Activated CD8-positive, alpha-beta memory T cell treated with anti-CD3 and anti-CD28 coated beads, Interleukin-2, amount 10 ng/mL, durations not matched to agents 7 days and 5 days (primary cell): ENCODE measurements at regions of chr15 and their contacts with region 1.

Region 1: GRCh38 chr15:63191895-63192618 is 2.7 kb downstream of the RAB8B start:
- DNase-seq: peak; percentile 81
- ATAC-seq: peak; percentile 43
- H3K4me3 Mint-ChIP-seq: peak overlapping the region; percentile 96
- H3K27ac Mint-ChIP-seq: peak overlapping the region; percentile 100
- H3K4me1 Mint-ChIP-seq: peaks cover 70% of the 10 kb centered on the region
- H3K27me3 Mint-ChIP-seq: no peaks in the 10 kb centered on the region

Region 2: GRCh38 chr15:62782039-62782791 is 409.8 kb before region 1 on chr15:
- CTCF ChIA-PET with region 1: no interaction called
- DNase-seq: no peak
- ATAC-seq: no peak
- H3K4me3 Mint-ChIP-seq: no peak overlapping the region
- H3K27ac Mint-ChIP-seq: no peak overlapping the region
- H3K4me1 Mint-ChIP-seq: no peaks in the 10 kb centered on the region
- H3K27me3 Mint-ChIP-seq: peaks cover 11% of the 10 kb centered on the region

Region 3: DNA sequence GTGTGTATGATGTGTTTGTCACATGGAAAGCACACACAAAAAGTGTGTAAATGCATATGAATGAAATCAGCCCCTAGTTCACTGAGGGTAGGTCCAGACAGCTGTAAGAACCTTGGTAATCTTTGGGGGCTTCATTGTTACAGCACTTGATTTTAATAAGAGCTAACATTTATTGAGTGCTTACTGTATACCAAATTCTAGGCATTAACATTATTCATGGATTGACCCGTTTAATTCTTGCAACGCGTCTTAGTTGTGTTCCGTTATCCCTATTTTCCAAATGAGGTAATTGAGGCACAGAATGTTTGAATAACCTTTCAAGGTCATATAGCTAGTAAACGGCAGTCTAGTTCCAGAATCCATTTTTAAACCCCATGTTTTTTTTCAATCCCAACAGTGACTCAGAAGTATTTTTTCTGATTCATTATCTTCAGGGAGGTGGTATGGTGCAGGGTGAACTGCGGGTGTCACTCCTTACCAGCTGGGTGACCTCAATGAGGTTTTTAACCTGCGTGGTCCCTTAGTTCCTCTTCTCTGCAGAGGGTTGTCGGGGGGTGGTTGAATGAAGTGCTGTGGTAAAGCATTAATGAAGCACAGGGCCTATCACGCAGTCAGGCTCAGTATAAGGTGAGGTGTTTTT is 11.5 kb after region 1 on chr15:
- CTCF ChIA-PET with region 1: interaction called, 16 read pairs
- DNase-seq: peak; percentile 83
- ATAC-seq: peak; percentile 82
- H3K4me3 Mint-ChIP-seq: peak overlapping the region; percentile 16
- H3K27ac Mint-ChIP-seq: peak overlapping the region; percentile 47
- H3K4me1 Mint-ChIP-seq: peaks cover 76% of the 10 kb centered on the region
- H3K27me3 Mint-ChIP-seq: no peaks in the 10 kb centered on the region

Region 4: DNA sequence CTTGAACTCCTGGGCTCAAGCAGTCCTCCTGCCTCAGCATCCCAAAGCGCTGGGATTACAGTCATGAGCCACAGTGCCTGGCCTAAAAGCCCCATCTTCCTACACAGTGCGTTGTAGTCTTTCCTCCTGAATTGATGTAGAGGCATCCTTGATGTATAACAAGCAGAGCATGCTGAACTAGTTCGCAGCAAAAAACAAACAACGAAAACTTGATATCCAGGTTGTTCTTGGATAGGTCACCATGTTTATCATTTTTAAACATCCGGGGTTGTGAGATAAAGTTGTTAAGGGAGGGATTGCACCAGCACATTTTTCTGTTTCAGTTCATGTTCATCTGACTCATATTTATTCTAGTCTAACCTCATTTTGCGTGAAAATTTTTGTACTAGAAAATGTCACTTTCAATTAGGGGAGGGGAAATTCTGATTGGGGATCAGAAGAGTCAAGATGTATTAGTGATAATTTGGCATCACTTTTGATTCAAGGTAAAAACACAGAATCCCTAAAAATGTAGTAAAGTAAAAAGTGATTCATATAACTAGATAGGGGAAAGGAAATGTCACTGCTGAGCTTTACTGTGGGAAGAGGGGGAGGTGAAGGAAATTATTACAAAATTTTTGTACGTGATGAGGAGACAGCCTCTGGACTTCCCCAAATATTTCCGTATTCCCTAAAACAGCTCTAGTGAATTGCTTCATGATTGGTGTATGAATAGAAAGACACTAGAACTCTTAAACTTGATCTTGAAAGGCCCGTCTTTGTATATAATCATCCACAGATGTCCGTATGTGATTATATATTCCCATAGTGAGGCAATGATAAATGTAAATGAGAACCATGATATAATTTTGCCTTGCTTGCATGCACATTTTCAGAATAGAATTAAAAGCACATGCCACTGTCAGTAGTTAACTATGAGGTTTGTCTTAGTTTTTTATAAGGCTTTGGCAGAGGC is 20.3 kb after region 1 on chr15:
- CTCF ChIA-PET with region 1: interaction called, 15 read pairs
- DNase-seq: no peak
- ATAC-seq: peak; percentile 59
- H3K4me3 Mint-ChIP-seq: peak overlapping the region; percentile 50
- H3K27ac Mint-ChIP-seq: peak overlapping the region; percentile 94
- H3K4me1 Mint-ChIP-seq: peaks cover 69% of the 10 kb centered on the region
- H3K27me3 Mint-ChIP-seq: no peaks in the 10 kb centered on the region

Region 5: GRCh38 chr15:63234451-63234870 is 42.4 kb after region 1 on chr15:
- CTCF ChIA-PET with region 1: interaction called, 32 read pairs
- DNase-seq: no peak
- ATAC-seq: no peak
- H3K4me3 Mint-ChIP-seq: no peak overlapping the region
- H3K27ac Mint-ChIP-seq: peak overlapping the region; percentile 42
- H3K4me1 Mint-ChIP-seq: peaks cover 63% of the 10 kb centered on the region
- H3K27me3 Mint-ChIP-seq: no peaks in the 10 kb centered on the region

Region 6: GRCh38 chr15:63288778-63289378 is 96.8 kb after region 1 on chr15:
- CTCF ChIA-PET with region 1: no interaction called
- DNase-seq: no peak
- ATAC-seq: peak; percentile 69
- H3K4me3 Mint-ChIP-seq: no peak overlapping the region
- H3K27ac Mint-ChIP-seq: no peak overlapping the region
- H3K4me1 Mint-ChIP-seq: peaks cover 8% of the 10 kb centered on the region
- H3K27me3 Mint-ChIP-seq: no peaks in the 10 kb centered on the region

Region 7: DNA sequence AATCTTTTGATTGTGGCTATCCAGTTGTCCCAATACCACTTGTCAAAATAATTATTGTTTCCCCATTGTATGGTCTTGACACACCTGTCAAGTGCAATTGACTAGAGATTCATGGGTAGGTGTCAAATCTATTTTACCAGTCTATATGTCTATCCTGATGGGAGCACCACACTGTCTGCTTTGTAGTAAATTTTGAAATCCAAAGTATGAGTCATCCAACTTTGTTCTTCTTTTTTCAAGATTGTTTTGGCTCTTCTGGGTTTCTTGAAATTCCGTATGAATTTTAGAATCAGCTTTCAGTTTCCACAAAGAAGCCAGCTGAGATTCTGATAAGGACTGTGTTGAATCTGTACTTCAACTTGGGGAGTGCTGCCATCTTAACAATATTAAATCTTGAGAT is 1092.0 kb after region 1 on chr15:
- CTCF ChIA-PET with region 1: no interaction called
- DNase-seq: no peak
- ATAC-seq: no peak
- H3K4me3 Mint-ChIP-seq: no peak overlapping the region
- H3K27ac Mint-ChIP-seq: no peak overlapping the region
- H3K4me1 Mint-ChIP-seq: peaks cover 6% of the 10 kb centered on the region
- H3K27me3 Mint-ChIP-seq: no peaks in the 10 kb centered on the region